Activated B cell treated with CpG ODN at 0.5 μM for 24 hours (primary cell): ENCODE measurements at regions of chr15 and their contacts with region 1.

Region 1: DNA sequence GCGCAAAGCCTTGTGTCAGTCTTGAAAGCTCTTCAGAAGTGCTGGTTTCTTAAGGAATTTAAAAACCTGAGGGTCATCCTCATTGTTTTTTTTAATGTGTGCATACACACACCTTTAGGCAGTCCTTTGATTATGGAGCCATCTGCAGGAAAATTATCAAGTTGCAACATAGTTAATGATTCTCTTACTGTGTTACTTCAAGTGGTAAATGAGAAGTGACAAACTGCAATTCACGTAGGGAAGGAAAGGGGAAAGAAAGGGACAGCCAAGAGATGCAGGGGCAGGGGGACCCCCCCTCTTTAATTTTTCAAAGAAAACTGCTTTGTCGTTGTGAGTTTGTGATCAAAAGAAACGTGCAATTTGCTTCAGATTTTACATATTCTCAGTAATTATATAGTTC is 162.4 kb upstream of the CGNL1 start:
- DNase-seq: no peak
- ATAC-seq: peak; percentile 65
- H3K4me3 Mint-ChIP-seq: no peak overlapping the region
- H3K27ac Mint-ChIP-seq: no peak overlapping the region
- H3K4me1 Mint-ChIP-seq: peaks cover 32% of the 10 kb centered on the region
- H3K27me3 Mint-ChIP-seq: no peaks in the 10 kb centered on the region
- CTCF ChIP-seq: no peak

Region 2: GRCh38 chr15:56496635-56497034 is 717.2 kb before region 1 on chr15:
- CTCF ChIA-PET with region 1: interaction called, 10 read pairs
- POLR2A ChIA-PET with region 1: no interaction called
- intact Hi-C with region 1: loop called (anchors 1 kb)
- DNase-seq: no peak
- ATAC-seq: peak; percentile 81
- H3K4me3 Mint-ChIP-seq: peak overlapping the region; percentile 20
- H3K27ac Mint-ChIP-seq: no peak overlapping the region
- H3K4me1 Mint-ChIP-seq: peaks cover 4% of the 10 kb centered on the region
- H3K27me3 Mint-ChIP-seq: no peaks in the 10 kb centered on the region
- CTCF ChIP-seq: no peak

Region 3: GRCh38 chr15:57017024-57017423 is 196.8 kb before region 1 on chr15:
- CTCF ChIA-PET with region 1: no interaction called
- POLR2A ChIA-PET with region 1: no interaction called
- intact Hi-C with region 1: loop called (anchors 5 kb)
- DNase-seq: no peak
- ATAC-seq: no peak
- H3K4me3 Mint-ChIP-seq: no peak overlapping the region
- H3K27ac Mint-ChIP-seq: no peak overlapping the region
- H3K4me1 Mint-ChIP-seq: peaks cover 18% of the 10 kb centered on the region
- H3K27me3 Mint-ChIP-seq: no peaks in the 10 kb centered on the region
- CTCF ChIP-seq: no peak

Region 4: GRCh38 chr15:57227899-57228298 is 14.0 kb after region 1 on chr15:
- CTCF ChIA-PET with region 1: interaction called, 3 read pairs
- POLR2A ChIA-PET with region 1: no interaction called
- intact Hi-C with region 1: loop called (anchors 2 kb)
- DNase-seq: no peak
- ATAC-seq: no peak
- H3K4me3 Mint-ChIP-seq: no peak overlapping the region
- H3K27ac Mint-ChIP-seq: no peak overlapping the region
- H3K4me1 Mint-ChIP-seq: peaks cover 21% of the 10 kb centered on the region
- H3K27me3 Mint-ChIP-seq: no peaks in the 10 kb centered on the region
- CTCF ChIP-seq: no peak

Region 5: GRCh38 chr15:57406062-57406772 is 192.4 kb after region 1 on chr15:
- CTCF ChIA-PET with region 1: no interaction called
- POLR2A ChIA-PET with region 1: no interaction called
- intact Hi-C with region 1: no loop called
- DNase-seq: no peak
- ATAC-seq: no peak
- H3K4me3 Mint-ChIP-seq: no peak overlapping the region
- H3K27ac Mint-ChIP-seq: no peak overlapping the region
- H3K4me1 Mint-ChIP-seq: no peaks in the 10 kb centered on the region
- H3K27me3 Mint-ChIP-seq: peaks cover 7% of the 10 kb centered on the region
- CTCF ChIP-seq: no peak